ENCODE measurements at regions of chr19 and their contacts with region 1.

Region 1: DNA sequence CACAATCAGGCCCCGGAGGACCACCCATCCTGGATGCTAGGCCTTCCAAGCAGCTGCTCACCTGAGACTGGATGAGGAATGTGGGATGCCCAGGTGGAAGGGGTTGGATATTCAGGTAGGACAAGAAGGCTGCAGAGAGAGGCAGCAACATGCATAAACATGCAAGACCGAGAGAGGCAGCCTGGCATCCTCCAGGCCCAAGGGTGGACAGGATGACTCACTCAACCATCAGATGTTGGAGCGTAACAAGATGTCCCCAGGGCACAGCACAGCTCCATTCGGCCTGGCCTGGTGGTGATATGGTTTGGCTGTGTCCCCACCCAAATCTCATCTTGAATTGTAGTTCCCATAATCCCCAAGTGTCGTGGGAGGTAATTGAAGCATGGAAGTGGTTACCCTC is 10.0 kb upstream of the CABP5 start:
- DNase-seq: no peak
- ATAC-seq: no peak
- H3K4me3 ChIP-seq: no peak overlapping the region
- H3K27ac ChIP-seq: no peak overlapping the region
- H3K4me1 ChIP-seq: no peaks in the 10 kb centered on the region
- H3K27me3 ChIP-seq: no peaks in the 10 kb centered on the region
- CTCF ChIP-seq: no peak

Region 2: GRCh38 chr19:47456721-47457478 is 597.0 kb before region 1 on chr19:
- intact Hi-C with region 1: loop called in 1 of 10 experiments (anchors 10 kb)
- DNase-seq: no peak
- ATAC-seq: peak in 1 of 8 donors; percentile 12
- H3K4me3 ChIP-seq: no peak overlapping the region
- H3K27ac ChIP-seq: no peak overlapping the region
- H3K4me1 ChIP-seq: peaks cover 0 to 6% (median 0%) of the 10 kb centered on the region in 9 donors
- H3K27me3 ChIP-seq: peaks cover 14 to 82% (median 67%) of the 10 kb centered on the region in 7 donors
- CTCF ChIP-seq: no peak

Region 3: GRCh38 chr19:47765523-47766358 is 288.1 kb before region 1 on chr19:
- intact Hi-C with region 1: no loop called
- DNase-seq: peak; percentile 57 to 80
- ATAC-seq: peak; percentile 76 to 84 (median 79)
- H3K4me3 ChIP-seq: no peak overlapping the region
- H3K27ac ChIP-seq: no peak overlapping the region
- H3K4me1 ChIP-seq: peaks cover 0 to 24% (median 4%) of the 10 kb centered on the region in 9 donors
- H3K27me3 ChIP-seq: no peaks in the 10 kb centered on the region
- CTCF ChIP-seq: peak; percentile 67 to 91 (median 84)

Region 4: GRCh38 chr19:47860602-47861297 is 193.1 kb before region 1 on chr19:
- intact Hi-C with region 1: no loop called
- DNase-seq: no peak
- ATAC-seq: no peak
- H3K4me3 ChIP-seq: no peak overlapping the region
- H3K27ac ChIP-seq: no peak overlapping the region
- H3K4me1 ChIP-seq: no peaks in the 10 kb centered on the region
- H3K27me3 ChIP-seq: peaks cover 0 to 39% (median 11%) of the 10 kb centered on the region in 7 donors
- CTCF ChIP-seq: no peak

Measured in heart right ventricle (tissue), 16 donors.